CD14-positive monocyte (primary cell): ENCODE measurements at regions of chr11 and their contacts with region 1.

Region 1: GRCh38 chr11:94504689-94505293 is 7.5 kb upstream of the C11orf97 start:
- DNase-seq: peak; percentile 33 to 58 (median 45)
- H3K4me3 ChIP-seq: no peak overlapping the region
- H3K4me3 Mint-ChIP-seq: no peak overlapping the region
- H3K27ac ChIP-seq: no peak overlapping the region
- H3K27ac Mint-ChIP-seq: no peak overlapping the region
- H3K4me1 ChIP-seq: peaks cover 3 to 8% of the 10 kb centered on the region in 2 donors
- H3K4me1 Mint-ChIP-seq: peaks cover 9% of the 10 kb centered on the region
- H3K27me3 ChIP-seq: no peaks in the 10 kb centered on the region
- H3K27me3 Mint-ChIP-seq: peaks cover 0 to 3% (median 0%) of the 10 kb centered on the region in 3 donors
- CTCF ChIP-seq: peak; percentile 82

Region 2: DNA sequence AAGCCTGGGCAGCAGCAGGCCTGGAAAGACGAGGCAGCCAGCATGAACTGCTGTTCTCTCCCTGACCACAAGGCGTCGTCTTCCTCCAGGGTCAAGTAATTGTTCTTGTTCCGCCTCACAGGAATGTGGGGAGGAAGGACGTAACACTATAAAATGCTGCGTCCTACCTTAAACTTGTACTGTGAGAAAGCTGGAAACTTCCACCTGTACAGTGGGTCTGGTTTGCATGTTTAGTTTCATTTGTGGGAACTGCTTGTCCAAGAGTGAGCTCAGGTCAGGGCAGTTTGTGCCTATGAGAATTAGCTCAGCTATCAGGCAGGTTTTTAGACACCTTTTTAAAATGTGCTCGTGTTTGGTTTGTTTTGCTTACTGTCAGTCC is 320.9 kb before region 1 on chr11:
- intact Hi-C with region 1: loop called (anchors 5 to 10 kb)
- DNase-seq: peak; percentile 29 to 43 (median 38)
- H3K4me3 ChIP-seq: no peak overlapping the region
- H3K4me3 Mint-ChIP-seq: no peak overlapping the region
- H3K27ac ChIP-seq: no peak overlapping the region
- H3K27ac Mint-ChIP-seq: peak overlapping the region in 1 of 7 donors; percentile 6
- H3K4me1 ChIP-seq: no peaks in the 10 kb centered on the region
- H3K4me1 Mint-ChIP-seq: peaks cover 1% of the 10 kb centered on the region
- H3K27me3 ChIP-seq: no peaks in the 10 kb centered on the region
- H3K27me3 Mint-ChIP-seq: peaks cover 0 to 3% (median 0%) of the 10 kb centered on the region in 3 donors
- CTCF ChIP-seq: peak; percentile 86

Region 3: GRCh38 chr11:94325681-94326080 is 179.1 kb before region 1 on chr11:
- intact Hi-C with region 1: loop called (anchors 5 to 10 kb)
- DNase-seq: peak; percentile 17 to 37 (median 18)
- H3K4me3 ChIP-seq: no peak overlapping the region
- H3K4me3 Mint-ChIP-seq: peak overlapping the region in 1 of 2 donors; percentile 32
- H3K27ac ChIP-seq: no peak overlapping the region
- H3K27ac Mint-ChIP-seq: no peak overlapping the region
- H3K4me1 ChIP-seq: peaks cover 0 to 9% of the 10 kb centered on the region in 2 donors
- H3K4me1 Mint-ChIP-seq: peaks cover 13% of the 10 kb centered on the region
- H3K27me3 ChIP-seq: no peaks in the 10 kb centered on the region
- H3K27me3 Mint-ChIP-seq: peaks cover 2 to 5% (median 3%) of the 10 kb centered on the region in 3 donors
- CTCF ChIP-seq: peak; percentile 50

Region 4: DNA sequence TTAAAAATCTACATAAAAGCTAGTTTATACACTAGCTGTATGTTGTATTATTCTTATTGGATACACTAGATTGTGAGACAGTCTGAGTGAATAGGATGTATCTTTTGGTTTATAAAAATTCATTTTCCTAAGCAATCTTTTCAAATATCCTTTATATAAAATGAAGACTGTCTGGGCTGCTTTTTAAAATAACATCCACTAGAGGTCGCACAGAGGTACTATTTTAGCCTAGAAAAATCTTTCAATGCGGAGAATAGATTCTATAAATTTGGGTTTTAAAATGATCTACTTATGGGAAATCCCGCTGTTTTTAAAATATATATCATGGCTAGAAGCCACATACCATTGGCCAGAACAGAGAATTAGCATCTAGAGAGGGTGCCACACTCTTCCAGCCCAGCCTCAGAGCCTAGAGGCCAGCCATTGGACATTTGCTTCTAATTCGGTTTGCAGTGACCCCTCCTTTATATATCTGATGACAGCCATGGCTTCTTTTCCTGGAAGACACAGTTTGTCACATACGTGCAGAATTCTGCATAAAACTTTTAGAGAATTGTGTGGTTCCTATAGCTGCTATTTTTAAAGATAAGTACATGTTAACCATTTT is 14.8 kb after region 1 on chr11:
- intact Hi-C with region 1: no loop called
- DNase-seq: peak; percentile 21 to 61 (median 43)
- H3K4me3 ChIP-seq: peak overlapping the region in 2 of 3 experiments; percentile 19 to 43
- H3K4me3 Mint-ChIP-seq: no peak overlapping the region
- H3K27ac ChIP-seq: no peak overlapping the region
- H3K27ac Mint-ChIP-seq: no peak overlapping the region
- H3K4me1 ChIP-seq: peaks cover 4 to 9% of the 10 kb centered on the region in 2 donors
- H3K4me1 Mint-ChIP-seq: peaks cover 4% of the 10 kb centered on the region
- H3K27me3 ChIP-seq: no peaks in the 10 kb centered on the region
- H3K27me3 Mint-ChIP-seq: peaks cover 0 to 2% (median 1%) of the 10 kb centered on the region in 3 donors
- CTCF ChIP-seq: peak; percentile 74